ENCODE measurements at regions of chr9 and their contacts with region 1.

Region 1: GRCh38 chr9:99184475-99185347 is 37.0 kb downstream of the ALG2 start:
- DNase-seq: peak; percentile 74 to 98 (median 88)

Region 2: DNA sequence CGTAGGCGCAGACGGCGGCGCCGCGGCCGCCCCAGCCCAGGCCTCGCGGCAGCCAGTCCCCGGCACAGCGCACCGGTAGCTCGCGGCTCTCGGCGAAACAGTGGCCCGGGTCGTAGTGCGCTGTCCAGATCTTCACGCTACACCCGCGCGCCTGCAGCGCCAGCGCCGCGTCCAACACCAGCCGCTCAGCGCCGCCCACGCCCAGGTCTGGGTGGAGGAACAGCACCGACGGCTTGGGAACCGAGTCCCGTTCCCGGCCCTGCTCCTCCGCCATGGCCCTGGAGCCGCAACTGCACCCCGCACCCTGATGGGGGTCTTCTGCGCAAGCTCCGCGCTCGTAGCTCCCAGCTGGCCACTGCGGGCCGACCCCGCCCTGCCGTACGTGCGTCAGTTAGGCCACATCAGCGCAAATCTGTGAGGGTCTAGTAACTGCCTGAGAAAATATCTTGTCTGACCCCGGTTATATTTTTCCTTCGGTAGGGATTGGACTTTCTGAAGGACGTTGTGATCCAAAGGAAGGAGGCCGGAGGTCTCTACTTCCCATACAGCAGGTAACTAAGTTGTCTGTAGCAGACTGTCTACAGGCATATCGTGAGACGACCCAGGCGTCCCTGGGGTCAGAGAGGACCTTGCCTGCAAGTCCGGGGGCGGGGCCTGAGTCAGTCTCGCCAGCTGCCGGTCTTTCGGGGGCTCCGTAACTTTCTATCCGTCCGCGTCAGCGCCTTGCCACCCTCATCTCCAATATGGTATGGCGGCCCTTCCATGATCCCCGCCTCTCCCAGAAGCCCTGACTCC is 37.1 kb after region 1 on chr9 and contains the starts of genes ALG2 and SEC61B:
- intact Hi-C with region 1: loop called (anchors 2 kb)
- DNase-seq: peak; percentile 91 to 99 (median 94)

Region 3: DNA sequence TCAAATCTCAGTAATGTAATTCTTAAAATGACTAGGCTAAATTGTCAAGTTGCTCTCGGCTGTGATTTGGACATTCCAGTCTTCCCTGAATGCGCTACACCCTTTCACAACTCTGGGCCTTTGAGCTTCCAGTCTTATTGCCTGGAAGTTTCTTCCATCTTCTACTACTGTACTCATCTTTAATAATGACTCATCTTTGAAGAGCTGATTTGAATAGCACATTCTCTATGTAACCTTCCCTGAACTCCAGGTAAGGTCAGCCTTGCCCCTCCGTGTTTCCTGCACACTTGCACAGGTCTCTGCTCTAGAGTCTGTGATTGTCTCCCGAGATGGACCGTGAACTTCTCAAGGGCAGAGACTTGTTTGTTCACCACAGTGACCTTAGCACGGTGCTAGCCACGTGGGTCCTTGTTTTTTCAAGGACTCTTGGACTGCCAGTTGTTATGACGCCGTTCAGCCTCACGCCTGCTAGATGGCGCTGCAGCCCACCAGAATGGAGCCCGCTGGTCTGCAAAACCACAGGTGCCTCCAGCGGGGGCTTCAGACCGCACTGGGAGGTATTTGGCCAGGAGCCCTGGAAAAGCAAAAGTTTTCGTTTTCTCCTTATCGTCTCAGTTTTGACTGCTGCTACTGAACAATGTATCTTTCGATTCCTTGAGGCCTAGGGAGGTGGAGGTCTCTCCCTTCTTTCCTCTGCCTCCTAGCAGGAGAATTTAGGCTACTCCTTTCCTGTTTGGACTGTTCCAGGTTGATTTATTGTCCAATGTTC is 81.7 kb after region 1 on chr9:
- intact Hi-C with region 1: loop called (anchors 10 kb)
- DNase-seq: peak; percentile 58 to 97 (median 79)